PC-9 (cell line): ENCODE measurements at regions of chr6 and their contacts with region 1.

Region 1: DNA sequence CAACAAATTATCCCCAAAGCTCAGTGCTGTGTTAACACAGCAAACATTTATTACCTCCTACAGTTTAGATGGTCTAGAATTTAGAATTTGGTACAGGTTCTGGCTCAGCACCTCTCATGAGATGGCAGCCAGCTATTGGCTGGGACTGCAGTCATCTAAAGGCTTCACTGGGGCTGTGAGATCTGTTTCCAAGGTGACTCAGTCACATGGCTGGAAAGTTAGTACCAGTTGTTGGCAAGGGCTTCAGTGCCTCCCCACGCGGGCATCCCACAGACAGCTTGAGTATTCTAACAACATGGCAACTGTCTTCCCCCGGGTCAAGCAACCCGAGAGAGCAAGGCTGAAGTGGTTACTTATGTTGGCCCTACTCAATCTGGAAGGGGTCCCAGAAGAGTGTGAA is 44.8 kb upstream of the F13A1 start:
- DNase-seq: no peak
- H3K4me3 ChIP-seq: no peak overlapping the region
- H3K27ac ChIP-seq: no peak overlapping the region
- H3K4me1 ChIP-seq: no peaks in the 10 kb centered on the region
- H3K27me3 ChIP-seq: no peaks in the 10 kb centered on the region
- CTCF ChIP-seq: no peak

Region 2: DNA sequence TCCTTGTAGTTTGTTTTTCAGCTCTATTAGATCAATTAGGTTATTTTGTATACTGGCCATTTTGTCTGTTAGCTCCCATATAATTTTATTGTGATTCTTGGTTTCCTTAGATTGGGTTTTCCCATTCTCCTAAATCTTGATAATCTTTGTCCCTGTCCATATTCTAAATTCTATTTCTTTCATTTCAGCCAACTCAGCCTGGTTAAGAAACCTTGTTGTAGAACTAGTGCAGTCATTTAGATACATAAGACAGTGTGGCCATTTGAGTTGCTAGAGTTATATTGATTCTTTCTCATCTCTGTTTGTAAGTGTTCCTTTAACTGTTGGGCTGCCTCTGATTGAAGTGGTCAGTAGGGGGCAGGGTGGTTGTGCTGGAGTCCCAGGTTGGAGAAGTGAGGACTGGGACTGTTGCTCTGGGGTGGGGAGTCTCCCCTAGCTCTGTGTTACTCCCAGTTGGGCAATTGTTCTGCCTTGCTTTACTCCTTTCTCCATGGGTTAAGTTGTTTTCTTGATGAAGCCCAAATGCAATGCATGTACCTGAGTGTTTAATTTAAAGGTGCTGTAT is 259.7 kb before region 1 on chr6:
- CTCF ChIA-PET with region 1: no interaction called
- POLR2A ChIA-PET with region 1: no interaction called
- intact Hi-C with region 1: no loop called
- DNase-seq: no peak
- H3K4me3 ChIP-seq: no peak overlapping the region
- H3K27ac ChIP-seq: no peak overlapping the region
- H3K4me1 ChIP-seq: no peaks in the 10 kb centered on the region
- H3K27me3 ChIP-seq: no peaks in the 10 kb centered on the region
- CTCF ChIP-seq: no peak

Region 3: GRCh38 chr6:6277413-6277812 is 87.8 kb before region 1 on chr6:
- CTCF ChIA-PET with region 1: no interaction called
- POLR2A ChIA-PET with region 1: interaction called, 16 read pairs
- intact Hi-C with region 1: no loop called
- DNase-seq: peak in 1 of 2 experiments; percentile 35
- H3K4me3 ChIP-seq: no peak overlapping the region
- H3K27ac ChIP-seq: no peak overlapping the region
- H3K4me1 ChIP-seq: no peaks in the 10 kb centered on the region
- H3K27me3 ChIP-seq: 0 out of 2 replicates have a peak, but pooled peaks cover 6% of the 10 kb centered on the region
- CTCF ChIP-seq: no peak

Region 4: DNA sequence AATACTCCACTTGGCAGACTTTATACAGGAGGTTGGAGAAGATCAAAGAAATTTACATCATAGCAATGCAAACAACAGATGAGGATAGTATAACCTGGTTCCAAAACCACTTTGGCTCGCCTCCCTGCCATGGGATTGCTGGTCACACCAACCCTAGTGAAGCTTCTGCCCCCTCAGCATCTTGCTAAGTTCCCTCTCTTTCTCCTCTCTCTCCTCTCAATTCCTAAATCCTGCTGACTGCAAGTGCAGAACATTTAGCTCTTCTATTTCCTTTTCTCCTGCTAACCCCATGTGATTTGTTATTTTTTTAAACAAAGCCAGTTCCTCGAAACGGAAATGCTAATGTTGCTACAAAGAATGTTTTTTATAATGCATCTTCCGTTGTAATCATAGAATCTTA is 173.0 kb after region 1 on chr6:
- CTCF ChIA-PET with region 1: no interaction called
- POLR2A ChIA-PET with region 1: no interaction called
- intact Hi-C with region 1: no loop called
- DNase-seq: no peak
- H3K4me3 ChIP-seq: no peak overlapping the region
- H3K27ac ChIP-seq: no peak overlapping the region
- H3K4me1 ChIP-seq: no peaks in the 10 kb centered on the region
- H3K27me3 ChIP-seq: peaks cover 19% of the 10 kb centered on the region
- CTCF ChIP-seq: no peak